ENCODE measurements at regions of chr1 and their contacts with region 1.

Region 1: GRCh38 chr1:28248283-28249012 is 10.9 kb upstream of the SESN2 start:
- DNase-seq: peak; percentile 67 to 86 (median 80)
- ATAC-seq: peak; percentile 36
- H3K4me3 ChIP-seq: peak overlapping the region; percentile 75
- H3K4me3 Mint-ChIP-seq: peak overlapping the region; percentile 80 to 99 (median 90)
- H3K27ac ChIP-seq: peak overlapping the region; percentile 95
- H3K27ac Mint-ChIP-seq: peak overlapping the region; percentile 90 to 100 (median 94)
- H3K4me1 ChIP-seq: peaks cover 46 to 52% of the 10 kb centered on the region in 2 donors
- H3K4me1 Mint-ChIP-seq: peaks cover 38 to 52% (median 49%) of the 10 kb centered on the region in 7 donors
- H3K27me3 ChIP-seq: no peaks in the 10 kb centered on the region
- H3K27me3 Mint-ChIP-seq: no peaks in the 10 kb centered on the region

Region 2: GRCh38 chr1:27772933-27773825 is 475.3 kb before region 1 on chr1 and contains the start of gene STX12:
- CTCF ChIA-PET with region 1: no interaction called
- POLR2A ChIA-PET with region 1: no interaction called
- intact Hi-C with region 1: loop called in 1 of 2 experiments (anchors 2 kb)
- DNase-seq: peak; percentile 97 to 100 (median 98)
- ATAC-seq: peak; percentile 96
- H3K4me3 ChIP-seq: peak within 1 kb of the TSS; percentile 97
- H3K4me3 Mint-ChIP-seq: peak within 1 kb of the TSS; percentile 84 to 97 (median 94)
- H3K27ac ChIP-seq: peak within 1 kb of the TSS; percentile 94
- H3K27ac Mint-ChIP-seq: peak within 1 kb of the TSS; percentile 90 to 99 (median 96)
- H3K4me1 ChIP-seq: peaks cover 10 to 13% of the 10 kb centered on the region in 2 donors
- H3K4me1 Mint-ChIP-seq: peaks cover 26 to 43% (median 37%) of the 10 kb centered on the region in 7 donors
- H3K27me3 ChIP-seq: no peaks in the 10 kb centered on the region
- H3K27me3 Mint-ChIP-seq: no peaks in the 10 kb centered on the region
- total RNA-seq, gene STX12: 23.9 to 38.7 (median 28.9) TPM

Region 3: DNA sequence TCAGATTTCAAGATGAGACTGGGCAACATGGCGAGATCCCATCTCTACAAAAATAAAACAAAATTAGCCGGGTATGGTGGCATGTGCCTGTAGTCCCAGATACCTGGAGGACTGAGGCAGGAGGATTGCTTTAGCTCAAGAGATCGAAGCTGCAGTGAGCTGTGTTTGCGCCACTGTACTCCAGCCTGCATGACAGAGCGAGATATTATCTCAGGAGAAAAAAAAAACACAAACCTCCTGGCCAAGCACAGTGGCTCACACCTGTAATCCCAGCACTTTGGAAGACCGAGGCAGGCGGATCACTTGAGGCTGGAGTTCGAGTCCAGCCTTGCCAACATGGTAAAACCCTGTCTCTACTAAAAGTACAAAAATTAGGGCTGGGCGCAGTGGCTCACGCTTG is 245.8 kb before region 1 on chr1:
- CTCF ChIA-PET with region 1: no interaction called
- POLR2A ChIA-PET with region 1: no interaction called
- intact Hi-C with region 1: no loop called
- DNase-seq: no peak
- ATAC-seq: no peak
- H3K4me3 ChIP-seq: no peak overlapping the region
- H3K4me3 Mint-ChIP-seq: no peak overlapping the region
- H3K27ac ChIP-seq: no peak overlapping the region
- H3K27ac Mint-ChIP-seq: no peak overlapping the region
- H3K4me1 ChIP-seq: no peaks in the 10 kb centered on the region
- H3K4me1 Mint-ChIP-seq: peaks cover 0 to 2% (median 0%) of the 10 kb centered on the region in 7 donors
- H3K27me3 ChIP-seq: no peaks in the 10 kb centered on the region
- H3K27me3 Mint-ChIP-seq: no peaks in the 10 kb centered on the region

Region 4: DNA sequence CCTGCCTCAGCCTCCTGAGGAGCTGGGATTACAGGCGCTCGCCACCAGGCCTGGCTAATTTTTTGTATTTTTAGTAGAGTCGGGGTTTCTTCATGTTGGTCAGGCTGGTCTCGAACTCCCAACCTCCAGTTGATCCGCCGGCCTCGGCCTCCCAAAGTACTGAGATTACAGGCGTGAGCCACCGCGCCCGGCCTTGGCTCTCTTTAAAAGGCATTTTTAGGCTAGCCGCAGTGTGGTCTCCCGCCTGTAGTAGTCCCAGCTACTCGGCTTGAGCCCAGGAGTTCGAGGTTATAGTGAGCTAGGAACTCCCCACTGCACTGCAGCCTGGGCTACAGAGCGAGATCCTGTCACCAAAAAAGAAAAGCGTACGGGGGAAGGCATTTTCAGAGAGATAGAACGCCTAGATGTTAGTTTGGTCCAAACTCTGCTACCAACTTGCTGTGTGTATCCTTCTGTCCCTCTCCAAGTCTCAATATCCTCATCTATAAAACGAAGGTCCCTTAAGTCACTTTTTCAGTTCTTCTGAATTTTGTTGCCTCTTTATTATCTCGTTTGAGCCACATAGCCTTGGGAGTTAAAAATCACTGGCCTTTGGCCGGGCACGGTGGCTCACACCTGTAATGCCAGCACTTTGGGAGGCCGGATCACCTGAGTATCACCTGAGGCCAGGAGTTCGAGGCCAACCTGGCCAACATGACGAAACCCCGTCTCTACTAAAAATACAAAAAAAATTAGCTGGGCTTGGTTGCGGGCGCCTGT is 81.1 kb after region 1 on chr1:
- CTCF ChIA-PET with region 1: interaction called, 5 read pairs
- POLR2A ChIA-PET with region 1: interaction called, 31 read pairs
- intact Hi-C with region 1: loop called (anchors 1 kb)
- DNase-seq: peak in 2 of 9 donors; percentile 32 to 48
- ATAC-seq: peak; percentile 14
- H3K4me3 ChIP-seq: peak overlapping the region; percentile 59
- H3K4me3 Mint-ChIP-seq: peak overlapping the region; percentile 89 to 98 (median 92)
- H3K27ac ChIP-seq: peak overlapping the region; percentile 86
- H3K27ac Mint-ChIP-seq: peak overlapping the region; percentile 92 to 100 (median 98)
- H3K4me1 ChIP-seq: peaks cover 13 to 14% of the 10 kb centered on the region in 2 donors
- H3K4me1 Mint-ChIP-seq: peaks cover 20 to 40% (median 39%) of the 10 kb centered on the region in 7 donors
- H3K27me3 ChIP-seq: no peaks in the 10 kb centered on the region
- H3K27me3 Mint-ChIP-seq: peaks cover 0 to 3% (median 0%) of the 10 kb centered on the region in 5 donors

Region 5: GRCh38 chr1:28449904-28450303 is 201.5 kb after region 1 on chr1:
- CTCF ChIA-PET with region 1: no interaction called
- POLR2A ChIA-PET with region 1: no interaction called
- intact Hi-C with region 1: loop called in 1 of 2 experiments (anchors 5 kb)
- DNase-seq: peak in 6 of 9 donors; percentile 8 to 56 (median 32)
- ATAC-seq: peak; percentile 67
- H3K4me3 ChIP-seq: no peak overlapping the region
- H3K4me3 Mint-ChIP-seq: peak overlapping the region in 3 of 10 donors; percentile 16 to 34 (median 30)
- H3K27ac ChIP-seq: no peak overlapping the region
- H3K27ac Mint-ChIP-seq: peak overlapping the region in 7 of 9 donors; percentile 27 to 87 (median 47)
- H3K4me1 ChIP-seq: peaks cover 0 to 4% of the 10 kb centered on the region in 2 donors
- H3K4me1 Mint-ChIP-seq: peaks cover 11 to 42% (median 23%) of the 10 kb centered on the region in 7 donors
- H3K27me3 ChIP-seq: no peaks in the 10 kb centered on the region
- H3K27me3 Mint-ChIP-seq: no peaks in the 10 kb centered on the region

Region 6: DNA sequence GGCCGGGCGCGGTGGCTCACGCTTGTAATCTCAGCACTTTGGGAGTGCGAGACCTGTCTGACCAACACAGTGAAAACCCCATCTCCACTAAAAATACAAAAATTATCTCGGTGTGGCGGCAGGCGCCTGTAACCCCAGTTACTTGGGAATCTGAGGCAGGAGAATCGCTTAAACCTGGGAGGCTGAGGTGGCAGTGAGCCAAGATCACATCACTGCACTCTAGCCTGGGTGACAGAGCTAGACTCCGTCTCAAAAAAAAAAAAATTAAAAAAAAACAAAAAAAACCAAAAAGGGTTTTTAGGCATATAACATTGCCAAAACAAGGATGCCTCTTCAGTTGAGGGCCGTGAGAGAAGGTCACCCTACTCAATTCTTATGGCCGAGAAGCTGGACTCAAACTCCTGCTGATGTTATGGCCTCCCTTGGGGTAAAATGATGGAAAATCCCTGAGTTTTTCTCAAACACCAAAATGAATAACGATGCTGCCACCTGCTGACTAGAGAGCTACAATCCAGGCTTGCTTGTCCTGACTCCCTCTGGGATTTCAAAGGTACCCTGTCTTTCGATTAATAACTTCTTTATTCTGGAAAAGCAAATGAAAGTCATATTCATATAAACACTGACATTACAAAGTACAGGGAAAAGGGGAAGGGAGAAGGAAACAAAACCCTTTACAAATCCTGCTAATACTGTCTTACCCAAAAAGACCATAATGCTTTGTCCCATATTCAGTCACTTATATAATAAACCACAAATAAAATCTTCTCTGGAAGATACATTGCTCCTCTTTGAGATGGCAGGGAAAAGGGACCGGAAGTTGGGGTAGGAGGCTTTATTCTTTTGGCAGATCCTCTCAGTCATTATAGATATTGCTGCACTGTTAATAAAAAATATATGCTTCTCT is 354.3 kb after region 1 on chr1:
- CTCF ChIA-PET with region 1: interaction called, 3 read pairs
- POLR2A ChIA-PET with region 1: no interaction called
- intact Hi-C with region 1: loop called in 1 of 2 experiments (anchors 1 kb)
- DNase-seq: peak in 3 of 9 donors; percentile 22 to 36 (median 25)
- ATAC-seq: no peak
- H3K4me3 ChIP-seq: no peak overlapping the region
- H3K4me3 Mint-ChIP-seq: no peak overlapping the region
- H3K27ac ChIP-seq: no peak overlapping the region
- H3K27ac Mint-ChIP-seq: peak overlapping the region in 1 of 9 donors; percentile 36
- H3K4me1 ChIP-seq: no peaks in the 10 kb centered on the region
- H3K4me1 Mint-ChIP-seq: peaks cover 0 to 23% (median 0%) of the 10 kb centered on the region in 7 donors
- H3K27me3 ChIP-seq: no peaks in the 10 kb centered on the region
- H3K27me3 Mint-ChIP-seq: no peaks in the 10 kb centered on the region

Region 7: GRCh38 chr1:28736450-28737306 is 488.2 kb after region 1 on chr1 and contains the start of gene YTHDF2:
- CTCF ChIA-PET with region 1: no interaction called
- POLR2A ChIA-PET with region 1: interaction called, 6 read pairs
- intact Hi-C with region 1: loop called (anchors 5 kb)
- DNase-seq: peak; percentile 95 to 98 (median 98)
- ATAC-seq: peak; percentile 97
- H3K4me3 ChIP-seq: peak within 1 kb of the TSS; percentile 88
- H3K4me3 Mint-ChIP-seq: peak within 1 kb of the TSS; percentile 92 to 100 (median 98)
- H3K27ac ChIP-seq: peak within 1 kb of the TSS; percentile 92
- H3K27ac Mint-ChIP-seq: peak within 1 kb of the TSS; percentile 93 to 98 (median 95)
- H3K4me1 ChIP-seq: peaks cover 26% of the 10 kb centered on the region in 2 donors
- H3K4me1 Mint-ChIP-seq: peaks cover 15 to 49% (median 34%) of the 10 kb centered on the region in 7 donors
- H3K27me3 ChIP-seq: no peaks in the 10 kb centered on the region
- H3K27me3 Mint-ChIP-seq: no peaks in the 10 kb centered on the region
- total RNA-seq, gene YTHDF2: 64.5 to 72.0 (median 71.5) TPM